ENCODE measurements at regions of chr5 and their contacts with region 1.

Region 1: DNA sequence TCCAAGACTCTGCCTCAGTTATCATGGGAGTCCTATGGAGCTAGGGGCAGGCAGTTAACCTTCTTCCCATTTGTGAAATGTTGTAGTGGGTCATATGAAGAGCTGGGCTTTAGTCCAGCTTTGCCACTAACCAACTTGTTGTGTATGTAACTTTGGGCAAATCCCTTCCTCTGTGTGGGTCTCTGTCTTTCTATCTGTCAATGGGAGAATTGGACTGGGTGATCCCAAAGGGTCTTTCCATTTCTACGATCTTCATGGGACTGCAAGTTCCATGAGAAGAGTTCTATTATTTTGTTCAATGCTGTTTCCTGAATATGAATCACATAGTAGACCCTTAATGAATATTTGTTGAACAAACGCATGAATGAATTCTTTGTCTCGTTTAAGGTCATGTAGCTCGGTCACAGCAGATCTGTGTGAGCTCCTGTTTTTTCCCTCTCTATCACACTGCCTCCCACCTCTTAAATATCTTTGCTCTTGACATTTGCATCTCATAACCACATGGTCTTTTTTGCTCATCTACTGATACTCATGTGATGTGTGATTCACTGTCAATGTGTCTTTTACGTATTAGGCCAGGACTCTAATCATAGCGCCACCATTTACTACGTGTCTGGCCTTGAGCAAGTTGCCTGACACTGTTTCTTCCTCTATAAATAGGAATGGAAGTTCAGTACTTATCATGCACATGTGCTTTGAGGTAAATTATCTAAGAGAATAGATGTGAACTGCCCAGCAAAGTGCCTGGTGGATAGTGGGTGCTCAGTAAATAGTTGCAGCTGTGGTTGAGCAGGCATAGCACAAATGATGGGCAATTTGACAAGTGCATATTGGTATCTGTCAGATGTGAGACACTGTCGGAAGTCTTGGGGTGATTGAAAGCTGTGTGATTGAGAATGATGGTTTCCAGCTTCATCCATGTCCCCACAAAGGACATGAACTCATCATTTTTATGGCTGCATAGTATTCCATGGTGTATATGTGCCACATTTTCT is 37.4 kb downstream of the PTTG1 start:
- DNase-seq: peak; percentile 42
- CTCF ChIP-seq: no peak

Region 2: DNA sequence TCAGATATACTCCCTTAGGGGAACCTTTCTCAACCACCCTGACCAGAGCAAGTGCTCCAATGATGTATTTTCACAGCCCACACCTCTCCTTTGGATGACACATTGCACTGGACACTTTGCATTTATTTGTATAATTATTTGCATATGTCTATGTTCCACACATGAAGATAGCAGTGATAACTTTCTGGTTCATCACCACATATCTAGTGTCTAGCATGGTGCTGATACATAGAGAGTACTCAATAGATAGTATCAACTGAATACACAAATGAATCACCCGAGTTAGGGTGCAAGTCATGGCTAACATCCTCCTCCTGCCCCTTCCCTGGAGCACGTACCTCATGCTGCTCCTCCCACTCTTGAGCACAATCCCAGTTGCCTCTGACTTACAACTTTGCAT is 1977.0 kb before region 1 on chr5:
- CTCF ChIA-PET with region 1: no interaction called
- POLR2A ChIA-PET with region 1: no interaction called
- DNase-seq: no peak
- CTCF ChIP-seq: no peak

Region 3: DNA sequence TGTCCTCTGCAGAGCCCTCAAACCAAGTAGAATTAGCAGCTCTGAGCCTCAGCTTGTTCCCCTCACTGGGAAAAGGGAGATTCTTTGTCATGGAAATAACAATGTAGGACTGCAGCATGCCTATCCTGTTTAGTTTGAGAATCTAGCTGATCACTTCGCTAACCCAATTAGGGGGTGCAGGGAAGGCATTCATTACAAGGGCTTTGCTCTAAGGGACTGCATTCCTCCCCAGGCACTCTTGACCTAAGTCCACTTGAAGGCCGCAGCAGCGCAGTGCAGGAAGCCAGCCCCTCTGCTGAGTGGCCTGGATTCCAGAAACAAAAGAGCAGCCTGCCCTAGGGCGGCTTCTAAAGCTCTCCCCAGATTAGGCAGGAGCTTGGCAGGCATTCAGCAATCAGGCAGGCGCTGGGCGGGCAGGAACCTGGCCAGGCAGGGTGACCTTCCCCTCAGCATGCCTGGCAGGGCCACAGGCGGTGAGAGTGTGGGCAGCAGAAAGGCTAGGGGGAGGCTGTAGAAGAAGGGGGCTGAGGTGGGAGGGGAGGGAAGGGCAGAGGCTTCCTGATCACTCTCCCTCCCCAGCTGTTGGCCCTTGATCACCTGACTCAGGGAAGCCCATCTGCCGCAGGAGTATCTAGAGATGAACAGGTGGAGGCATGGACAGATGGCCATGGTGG is 171.6 kb before region 1 on chr5:
- CTCF ChIA-PET with region 1: no interaction called
- POLR2A ChIA-PET with region 1: no interaction called
- DNase-seq: no peak
- CTCF ChIP-seq: no peak

Region 4: DNA sequence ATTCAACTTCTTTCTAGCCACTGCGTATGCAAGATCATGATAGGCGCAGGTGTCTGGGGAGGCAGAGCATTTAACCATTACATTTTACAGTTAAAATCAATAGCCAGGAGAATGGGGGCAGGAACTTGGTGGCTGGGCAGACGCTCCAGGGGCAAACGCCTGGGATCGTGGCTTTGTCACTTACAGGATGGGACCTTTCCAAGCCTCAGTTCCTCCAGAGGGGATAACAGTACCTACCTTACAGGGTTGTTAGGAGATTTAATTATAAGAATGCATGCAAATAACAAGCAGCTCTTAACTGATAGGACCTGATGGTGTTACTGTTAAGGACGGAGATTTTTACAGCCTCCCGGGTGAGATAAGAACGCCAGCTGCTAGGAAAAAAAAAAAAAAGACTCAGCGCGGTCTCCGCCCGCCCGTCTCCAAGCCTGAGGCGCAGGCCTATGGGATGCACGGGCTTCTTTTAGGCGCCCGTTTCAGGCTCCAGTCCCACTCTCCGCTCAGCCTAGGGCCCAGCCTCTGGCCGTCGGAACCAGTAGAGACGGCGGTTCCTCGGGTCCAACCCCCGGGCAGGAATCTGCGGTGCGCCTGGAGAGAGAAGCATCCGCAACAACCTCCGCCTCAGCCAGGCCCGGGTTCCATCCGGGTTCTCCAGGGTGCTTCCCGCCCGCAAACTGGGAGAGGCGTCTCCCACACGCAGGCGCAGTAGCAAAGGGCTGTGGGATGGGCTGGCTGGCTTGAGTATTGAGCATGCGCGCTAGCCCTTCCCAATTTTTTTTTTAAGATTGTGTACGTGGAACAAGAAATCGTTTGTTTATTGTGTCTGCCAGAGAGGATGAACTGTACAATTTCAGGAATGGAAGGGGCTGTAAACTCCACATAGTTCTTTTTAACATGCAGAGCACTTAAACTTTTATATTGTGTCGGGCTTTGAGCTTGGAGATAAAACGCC is 59.4 kb before region 1 on chr5 and contains the start of gene FAM200C:
- CTCF ChIA-PET with region 1: no interaction called
- POLR2A ChIA-PET with region 1: no interaction called
- DNase-seq: peak; percentile 94
- CTCF ChIP-seq: no peak

Region 5: DNA sequence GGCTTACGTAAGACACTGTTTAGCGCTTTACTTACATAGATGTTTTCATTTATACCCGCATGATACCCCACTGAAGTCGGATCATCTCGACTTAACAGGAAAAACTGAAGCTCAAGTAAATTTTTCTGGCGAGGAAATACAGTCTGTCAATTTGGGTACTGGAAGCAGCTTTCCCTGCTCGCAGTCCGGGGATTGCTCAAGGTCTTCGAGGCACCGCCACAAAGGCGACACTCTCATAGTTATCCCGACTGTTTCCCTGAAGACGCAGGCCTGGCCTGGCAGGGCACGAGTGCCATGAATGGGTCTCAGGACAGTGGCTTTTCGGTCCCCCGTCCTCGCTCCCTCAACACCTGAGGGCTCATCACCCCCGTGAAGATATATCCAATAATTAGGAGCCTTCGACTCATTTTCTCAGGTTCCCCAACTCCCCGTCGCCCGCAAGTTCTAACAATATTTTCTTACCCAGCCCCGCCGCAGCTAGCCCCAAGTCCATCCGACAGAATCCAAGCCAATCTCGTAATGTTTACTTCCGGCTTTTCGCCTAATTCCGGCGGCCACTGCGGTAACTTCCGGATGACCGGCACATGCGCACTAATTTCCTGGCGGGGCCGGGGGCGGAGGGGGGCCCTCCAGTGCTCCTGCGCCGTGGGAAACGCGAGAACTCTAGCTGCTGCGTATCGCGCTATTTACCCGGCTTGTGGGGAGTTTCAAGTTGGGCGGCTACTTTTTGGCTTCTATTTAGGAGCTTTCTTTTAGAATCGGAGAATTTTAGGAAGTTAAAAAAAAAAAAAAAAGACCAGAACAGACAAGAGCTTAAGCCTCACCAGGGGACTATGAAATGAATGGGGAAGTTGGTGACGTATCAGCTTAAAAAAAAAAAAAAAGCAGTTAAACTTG is 40.3 kb before region 1 on chr5 and contains the start of gene SLU7:
- CTCF ChIA-PET with region 1: interaction called, 14 read pairs
- POLR2A ChIA-PET with region 1: interaction called, 7 read pairs
- DNase-seq: peak; percentile 93
- CTCF ChIP-seq: no peak

Measured in GM10248 (cell line).